ENCODE measurements at regions of chr5 and their contacts with region 1.

Region 1: GRCh38 chr5:170333161-170333910 is 35.8 kb upstream of the LCP2 start:
- DNase-seq: peak in 8 of 10 donors; percentile 18 to 59 (median 50)
- ATAC-seq: peak; percentile 27 to 45
- H3K4me3 Mint-ChIP-seq: peak overlapping the region in 6 of 10 donors; percentile 63 to 91 (median 78)
- H3K27ac Mint-ChIP-seq: no peak overlapping the region
- H3K4me1 Mint-ChIP-seq: peaks cover 0 to 44% (median 30%) of the 10 kb centered on the region in 4 donors
- H3K27me3 Mint-ChIP-seq: no peaks in the 10 kb centered on the region

Region 2: GRCh38 chr5:170262061-170263045 is 71.0 kb before region 1 on chr5:
- POLR2A ChIA-PET with region 1: interaction called, 45 read pairs
- DNase-seq: peak in 8 of 10 donors; percentile 62 to 90 (median 77)
- ATAC-seq: peak; percentile 81 to 90
- H3K4me3 Mint-ChIP-seq: peak overlapping the region; percentile 29 to 80 (median 72)
- H3K27ac Mint-ChIP-seq: peak overlapping the region; percentile 84 to 99 (median 96)
- H3K4me1 Mint-ChIP-seq: peaks cover 48 to 95% (median 90%) of the 10 kb centered on the region in 4 donors
- H3K27me3 Mint-ChIP-seq: no peaks in the 10 kb centered on the region

Region 3: GRCh38 chr5:170278611-170279452 is 54.5 kb before region 1 on chr5:
- POLR2A ChIA-PET with region 1: interaction called, 223 read pairs
- DNase-seq: peak; percentile 59 to 96 (median 92)
- ATAC-seq: peak; percentile 73 to 80
- H3K4me3 Mint-ChIP-seq: peak overlapping the region; percentile 67 to 97 (median 84)
- H3K27ac Mint-ChIP-seq: peak overlapping the region; percentile 92 to 99 (median 96)
- H3K4me1 Mint-ChIP-seq: peaks cover 69 to 100% (median 95%) of the 10 kb centered on the region in 4 donors
- H3K27me3 Mint-ChIP-seq: no peaks in the 10 kb centered on the region

Region 4: GRCh38 chr5:170287532-170287931 is 45.8 kb before region 1 on chr5:
- POLR2A ChIA-PET with region 1: interaction called, 280 read pairs
- DNase-seq: no peak
- ATAC-seq: peak in 1 of 2 donors; percentile 3
- H3K4me3 Mint-ChIP-seq: peak overlapping the region; percentile 29 to 99 (median 80)
- H3K27ac Mint-ChIP-seq: peak overlapping the region; percentile 92 to 99 (median 96)
- H3K4me1 Mint-ChIP-seq: peaks cover 79 to 100% (median 99%) of the 10 kb centered on the region in 4 donors
- H3K27me3 Mint-ChIP-seq: no peaks in the 10 kb centered on the region

Region 5: GRCh38 chr5:170302653-170303501 is 30.5 kb before region 1 on chr5:
- POLR2A ChIA-PET with region 1: interaction called, 280 read pairs
- DNase-seq: peak; percentile 44 to 87 (median 80)
- ATAC-seq: peak; percentile 93 to 97
- H3K4me3 Mint-ChIP-seq: peak overlapping the region; percentile 78 to 96 (median 89)
- H3K27ac Mint-ChIP-seq: peak overlapping the region; percentile 89 to 99 (median 96)
- H3K4me1 Mint-ChIP-seq: peaks cover 36 to 91% (median 86%) of the 10 kb centered on the region in 4 donors
- H3K27me3 Mint-ChIP-seq: no peaks in the 10 kb centered on the region

Region 6: GRCh38 chr5:170312666-170313065 is 20.7 kb before region 1 on chr5:
- POLR2A ChIA-PET with region 1: interaction called, 34 read pairs
- DNase-seq: peak in 2 of 10 donors; percentile 45 to 71
- ATAC-seq: peak; percentile 75 to 77
- H3K4me3 Mint-ChIP-seq: peak overlapping the region; percentile 31 to 86 (median 80)
- H3K27ac Mint-ChIP-seq: peak overlapping the region; percentile 85 to 96 (median 92)
- H3K4me1 Mint-ChIP-seq: peaks cover 36 to 80% (median 65%) of the 10 kb centered on the region in 4 donors
- H3K27me3 Mint-ChIP-seq: no peaks in the 10 kb centered on the region

Region 7: GRCh38 chr5:170319301-170319700 is 14.0 kb before region 1 on chr5:
- POLR2A ChIA-PET with region 1: interaction called, 34 read pairs
- DNase-seq: no peak
- ATAC-seq: peak; percentile 69 to 81
- H3K4me3 Mint-ChIP-seq: peak overlapping the region in 5 of 10 donors; percentile 5 to 56 (median 21)
- H3K27ac Mint-ChIP-seq: peak overlapping the region in 7 of 10 donors; percentile 24 to 81 (median 46)
- H3K4me1 Mint-ChIP-seq: peaks cover 19 to 54% (median 34%) of the 10 kb centered on the region in 4 donors
- H3K27me3 Mint-ChIP-seq: no peaks in the 10 kb centered on the region

Region 8: DNA sequence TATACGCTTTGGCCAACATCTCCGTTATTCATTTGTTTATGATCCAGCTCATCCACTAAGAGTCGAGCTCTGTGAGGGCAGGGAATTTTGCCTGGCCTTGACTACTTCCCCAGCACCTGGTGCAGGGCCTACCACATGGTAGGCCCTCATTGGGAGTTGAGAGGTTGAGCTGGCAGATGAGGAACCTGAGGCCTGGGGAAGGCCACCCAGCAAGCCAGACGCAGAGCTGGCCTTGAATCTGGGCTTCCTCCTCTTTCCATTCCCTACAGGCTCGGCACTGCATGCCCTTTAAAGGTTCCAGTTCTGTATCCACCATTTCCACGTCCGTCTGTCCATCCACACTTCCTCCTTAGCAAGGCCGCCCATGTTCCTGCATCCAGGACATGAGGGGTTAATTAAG is 31.7 kb after region 1 on chr5:
- POLR2A ChIA-PET with region 1: no interaction called
- DNase-seq: no peak
- ATAC-seq: no peak
- H3K4me3 Mint-ChIP-seq: no peak overlapping the region
- H3K27ac Mint-ChIP-seq: no peak overlapping the region
- H3K4me1 Mint-ChIP-seq: peaks cover 0 to 13% (median 0%) of the 10 kb centered on the region in 4 donors
- H3K27me3 Mint-ChIP-seq: no peaks in the 10 kb centered on the region

Region 9: DNA sequence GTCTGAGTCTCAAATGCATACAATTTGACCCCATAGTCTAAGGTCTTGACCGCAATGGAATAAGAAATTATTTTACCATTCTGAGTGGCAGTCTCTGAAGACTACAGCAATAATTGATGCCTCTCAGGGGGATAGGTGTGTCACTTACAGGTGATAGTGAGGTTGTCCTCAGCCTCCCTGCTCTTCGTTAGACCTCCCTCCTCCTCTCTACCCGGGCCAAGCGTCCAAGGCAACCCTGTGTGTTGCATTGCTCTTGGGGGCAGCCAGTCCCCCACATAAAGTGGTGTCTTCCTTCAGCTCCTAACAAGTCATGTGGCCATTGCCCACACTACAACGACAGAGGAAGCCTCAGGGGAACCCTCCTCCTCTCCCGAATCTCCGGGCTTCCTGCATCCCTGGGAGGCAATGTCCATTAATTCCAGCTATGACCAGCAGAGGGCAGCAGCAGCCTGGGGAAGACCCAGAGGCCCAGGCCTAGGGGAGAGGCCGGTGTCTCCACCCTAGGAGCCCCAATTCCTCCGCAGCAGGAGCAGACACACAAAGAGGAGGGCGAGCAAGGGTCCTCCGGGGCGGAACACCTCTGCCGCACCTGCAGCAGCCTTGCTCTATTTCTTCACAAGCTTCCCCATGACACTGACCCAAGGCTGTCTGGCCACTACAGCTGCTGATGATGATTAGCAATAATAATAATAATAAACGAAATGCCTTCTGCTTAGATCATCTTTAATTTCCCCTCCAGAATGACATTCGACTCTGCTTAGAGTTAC is 305.3 kb after region 1 on chr5:
- POLR2A ChIA-PET with region 1: no interaction called
- DNase-seq: peak; percentile 13 to 69 (median 50)
- ATAC-seq: no peak
- H3K4me3 Mint-ChIP-seq: no peak overlapping the region
- H3K27ac Mint-ChIP-seq: peak overlapping the region in 2 of 10 donors; percentile 44 to 59
- H3K4me1 Mint-ChIP-seq: peaks cover 10 to 18% (median 13%) of the 10 kb centered on the region in 4 donors
- H3K27me3 Mint-ChIP-seq: peaks cover 8 to 42% (median 20%) of the 10 kb centered on the region in 5 donors